ENCODE measurements at regions of chr2 and their contacts with region 1.

Region 1: DNA sequence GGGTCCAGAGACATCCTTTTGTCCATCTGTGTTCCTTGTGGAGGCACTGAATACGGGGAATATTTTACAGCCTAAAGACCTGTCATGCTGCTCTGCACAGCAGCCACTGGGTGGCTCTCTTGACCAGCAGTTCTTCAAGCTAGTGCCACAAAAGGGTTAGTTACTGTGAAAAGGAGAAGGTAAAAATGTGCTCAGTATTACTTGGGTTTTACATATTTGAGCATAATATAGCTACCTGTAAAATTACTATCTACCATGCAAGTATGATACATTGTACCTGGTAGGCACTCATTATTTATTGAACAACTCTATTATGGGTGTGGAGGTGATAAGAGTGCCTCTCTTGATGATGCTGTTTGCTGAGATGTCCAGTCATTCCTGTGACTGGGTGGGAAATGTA is 23.6 kb downstream of the FZD5 start:
- DNase-seq: peak; percentile 79
- ATAC-seq: peak; percentile 75
- H3K4me3 ChIP-seq: no peak overlapping the region
- H3K27ac ChIP-seq: no peak overlapping the region
- H3K4me1 ChIP-seq: peaks cover 12% of the 10 kb centered on the region
- H3K27me3 ChIP-seq: no peaks in the 10 kb centered on the region
- CTCF ChIP-seq: peak; percentile 97
- POLR2A ChIP-seq: peak; percentile 61
- RAD21 ChIP-seq: peak; percentile 100

Region 2: DNA sequence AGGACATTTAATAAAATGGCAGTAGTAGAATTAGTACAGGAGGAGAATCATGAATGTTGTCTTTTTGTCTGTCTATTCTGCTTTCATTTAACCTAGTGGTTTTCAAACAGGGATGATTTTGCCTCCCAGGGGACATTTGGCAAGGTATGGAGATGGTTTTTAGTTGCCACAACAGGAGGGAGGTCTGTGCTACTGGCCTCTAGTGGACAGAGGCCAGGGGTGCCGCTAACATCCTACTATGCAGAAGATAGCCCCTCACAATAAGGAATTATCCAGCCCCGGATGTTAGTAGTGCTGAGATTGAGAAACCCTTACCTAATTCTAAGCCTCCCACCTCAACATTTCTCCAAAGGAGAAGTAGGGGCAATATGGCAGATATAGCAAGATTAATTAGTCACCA is 962.4 kb before region 1 on chr2:
- CTCF ChIA-PET with region 1: no interaction called
- POLR2A ChIA-PET with region 1: no interaction called
- dilution Hi-C with region 1: no loop called
- in situ Hi-C with region 1: loop called (anchors 25 kb)
- intact Hi-C with region 1: no loop called
- DNase-seq: no peak
- ATAC-seq: peak; percentile 69
- H3K4me3 ChIP-seq: no peak overlapping the region
- H3K27ac ChIP-seq: no peak overlapping the region
- H3K4me1 ChIP-seq: no peaks in the 10 kb centered on the region
- H3K27me3 ChIP-seq: no peaks in the 10 kb centered on the region
- CTCF ChIP-seq: peak; percentile 36
- POLR2A ChIP-seq: no peak
- RAD21 ChIP-seq: no peak

Region 3: DNA sequence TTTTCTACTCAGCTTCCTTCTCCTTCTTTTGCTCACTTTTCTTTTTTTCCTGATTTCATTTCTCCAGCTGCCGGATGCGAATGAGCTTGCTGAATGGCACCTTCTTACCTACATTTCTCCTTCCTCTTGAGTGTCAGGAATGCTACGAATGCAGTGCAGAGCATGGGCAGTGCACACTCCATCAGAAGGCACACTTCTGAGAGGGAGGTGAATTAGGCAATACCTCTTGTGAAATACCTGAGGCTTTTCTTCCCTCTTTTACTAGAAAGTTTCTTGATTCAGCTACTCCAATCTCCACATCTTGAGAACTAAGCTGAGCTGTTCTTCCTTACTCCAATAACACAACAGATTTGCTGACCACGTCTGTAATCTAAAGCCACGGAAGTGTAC is 228.1 kb after region 1 on chr2:
- CTCF ChIA-PET with region 1: interaction called, 9 read pairs
- POLR2A ChIA-PET with region 1: no interaction called
- dilution Hi-C with region 1: no loop called
- in situ Hi-C with region 1: no loop called
- intact Hi-C with region 1: loop called (anchors 1 kb)
- DNase-seq: no peak
- ATAC-seq: no peak
- H3K4me3 ChIP-seq: no peak overlapping the region
- H3K27ac ChIP-seq: no peak overlapping the region
- H3K4me1 ChIP-seq: no peaks in the 10 kb centered on the region
- H3K27me3 ChIP-seq: no peaks in the 10 kb centered on the region
- CTCF ChIP-seq: no peak
- POLR2A ChIP-seq: no peak
- RAD21 ChIP-seq: no peak

Region 4: GRCh38 chr2:208040199-208041171 is 294.4 kb after region 1 on chr2:
- CTCF ChIA-PET with region 1: interaction called, 20 read pairs
- POLR2A ChIA-PET with region 1: no interaction called
- dilution Hi-C with region 1: no loop called
- in situ Hi-C with region 1: loop called (anchors 10 kb)
- intact Hi-C with region 1: loop called (anchors 1 kb)
- DNase-seq: peak; percentile 82
- ATAC-seq: peak; percentile 81
- H3K4me3 ChIP-seq: no peak overlapping the region
- H3K27ac ChIP-seq: no peak overlapping the region
- H3K4me1 ChIP-seq: peaks cover 7% of the 10 kb centered on the region
- H3K27me3 ChIP-seq: no peaks in the 10 kb centered on the region
- CTCF ChIP-seq: peak; percentile 81
- POLR2A ChIP-seq: no peak
- RAD21 ChIP-seq: peak; percentile 70

Region 5: DNA sequence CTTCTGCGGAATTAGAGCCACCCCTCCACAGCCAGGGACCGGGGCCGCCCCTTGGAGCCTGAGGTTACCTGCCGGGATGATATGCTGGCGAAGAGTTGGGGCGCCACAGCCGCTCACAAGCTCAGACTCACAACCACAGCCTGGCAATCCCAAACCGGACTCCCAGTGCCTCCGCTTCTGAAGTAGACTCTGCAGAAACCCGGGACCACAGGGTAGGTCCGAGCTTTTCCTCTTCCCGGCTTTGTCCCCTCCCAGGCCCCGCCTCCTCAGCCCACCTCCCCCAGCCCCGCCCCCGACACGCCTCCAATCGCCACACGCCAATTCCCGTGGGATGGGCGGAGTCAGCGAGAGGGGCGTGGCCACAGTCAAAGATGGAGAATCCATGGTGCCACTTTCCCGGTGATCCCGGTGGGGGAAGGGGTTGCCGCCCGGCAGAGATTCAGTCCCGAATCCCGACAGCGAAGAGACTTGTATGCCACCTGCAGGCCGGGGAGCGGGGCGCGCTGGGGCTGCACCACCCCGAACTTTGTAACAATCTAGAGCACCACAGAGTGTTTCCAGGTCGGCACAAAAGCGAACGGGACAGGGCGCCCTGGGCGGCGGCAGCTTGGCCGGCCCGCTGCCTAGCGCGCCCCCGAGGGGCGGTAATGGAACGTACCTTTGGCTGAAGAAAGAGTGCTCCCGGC is 508.9 kb after region 1 on chr2 and contains the start of gene IDH1:
- CTCF ChIA-PET with region 1: no interaction called
- POLR2A ChIA-PET with region 1: no interaction called
- dilution Hi-C with region 1: no loop called
- in situ Hi-C with region 1: loop called (anchors 25 kb)
- intact Hi-C with region 1: loop called (anchors 2 kb)
- DNase-seq: peak; percentile 89
- ATAC-seq: peak; percentile 93
- H3K4me3 ChIP-seq: peak within 1 kb of the TSS; percentile 75
- H3K27ac ChIP-seq: peak within 1 kb of the TSS; percentile 73
- H3K4me1 ChIP-seq: peaks cover 4% of the 10 kb centered on the region
- H3K27me3 ChIP-seq: no peaks in the 10 kb centered on the region
- CTCF ChIP-seq: peak; percentile 42
- POLR2A ChIP-seq: no peak
- RAD21 ChIP-seq: peak; percentile 31
- total RNA-seq, gene IDH1: 77.1 and 104 TPM in 2 replicates

Measured in IMR-90 (cell line).